ENCODE measurements at regions of chr10 and their contacts with region 1.

Region 1: DNA sequence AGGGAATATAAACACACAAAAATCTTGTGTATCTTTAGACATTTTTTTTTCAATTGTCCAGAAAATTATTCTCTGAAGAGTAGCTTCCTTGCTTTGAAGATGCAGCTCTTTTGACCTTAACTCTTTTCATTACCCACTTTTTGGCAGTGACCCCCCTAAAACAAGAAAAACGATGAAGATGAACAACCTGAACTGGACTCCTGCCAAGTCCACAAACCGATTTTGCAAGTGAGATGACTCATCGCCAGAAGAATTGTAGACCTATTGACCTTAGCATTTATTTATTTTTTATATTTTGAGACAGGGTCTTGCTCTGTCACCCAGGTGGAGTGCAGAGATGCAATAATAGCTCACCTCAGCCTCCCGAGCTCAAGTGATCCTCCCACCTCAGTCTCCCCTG is 859.2 kb downstream of the GATA3 start:
- DNase-seq: peak; percentile 92
- H3K4me3 Mint-ChIP-seq: peak overlapping the region; percentile 5
- H3K27ac Mint-ChIP-seq: peak overlapping the region; percentile 4
- H3K4me1 Mint-ChIP-seq: peaks cover 11% of the 10 kb centered on the region
- H3K27me3 Mint-ChIP-seq: no peaks in the 10 kb centered on the region
- CTCF ChIP-seq: no peak

Region 2: GRCh38 chr10:8927705-8928104 is 14.0 kb after region 1 on chr10:
- CTCF ChIA-PET with region 1: interaction called, 6 read pairs
- POLR2A ChIA-PET with region 1: interaction called, 27 read pairs
- intact Hi-C with region 1: no loop called
- DNase-seq: peak; percentile 90
- H3K4me3 Mint-ChIP-seq: peak overlapping the region; percentile 24
- H3K27ac Mint-ChIP-seq: peak overlapping the region; percentile 60
- H3K4me1 Mint-ChIP-seq: peaks cover 22% of the 10 kb centered on the region
- H3K27me3 Mint-ChIP-seq: no peaks in the 10 kb centered on the region
- CTCF ChIP-seq: no peak

Measured in MCF 10A (cell line).